Mucosa of descending colon (tissue), 3 donors: ENCODE measurements at regions of chr1 and their contacts with region 1.

Region 1: GRCh38 chr1:17419626-17420328 is 19.7 kb downstream of the RCC2 start:
- DNase-seq: peak; percentile 68 to 82 (median 80)
- ATAC-seq: peak; percentile 94
- H3K4me3 ChIP-seq: no peak overlapping the region
- H3K4me1 ChIP-seq: no peaks in the 10 kb centered on the region
- CTCF ChIP-seq: peak; percentile 99

Region 2: DNA sequence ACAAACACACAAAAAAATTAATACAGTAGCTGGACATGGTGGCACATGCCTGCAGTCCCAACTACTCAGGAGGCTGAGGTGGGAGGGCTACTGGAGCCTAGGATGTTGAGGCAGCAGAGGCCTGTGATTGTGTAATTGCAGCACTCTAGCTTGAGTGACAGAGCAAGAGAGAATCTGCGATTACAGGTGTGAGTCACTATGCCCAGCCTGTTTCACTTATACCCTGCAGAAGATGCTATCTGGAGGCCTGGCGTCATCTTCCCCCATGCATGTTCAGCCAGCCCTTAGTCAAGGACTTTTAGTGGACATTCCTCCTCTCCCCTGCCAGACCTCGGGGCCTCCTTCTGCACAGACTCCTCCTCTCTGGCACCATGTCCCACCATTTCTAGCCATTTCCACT is 56.0 kb after region 1 on chr1:
- intact Hi-C with region 1: loop called in 1 of 2 experiments (anchors 5 kb)
- DNase-seq: no peak
- ATAC-seq: no peak
- H3K4me3 ChIP-seq: no peak overlapping the region
- H3K4me1 ChIP-seq: no peaks in the 10 kb centered on the region
- CTCF ChIP-seq: no peak